ENCODE measurements at regions of chr1 and their contacts with region 1.

Region 1: DNA sequence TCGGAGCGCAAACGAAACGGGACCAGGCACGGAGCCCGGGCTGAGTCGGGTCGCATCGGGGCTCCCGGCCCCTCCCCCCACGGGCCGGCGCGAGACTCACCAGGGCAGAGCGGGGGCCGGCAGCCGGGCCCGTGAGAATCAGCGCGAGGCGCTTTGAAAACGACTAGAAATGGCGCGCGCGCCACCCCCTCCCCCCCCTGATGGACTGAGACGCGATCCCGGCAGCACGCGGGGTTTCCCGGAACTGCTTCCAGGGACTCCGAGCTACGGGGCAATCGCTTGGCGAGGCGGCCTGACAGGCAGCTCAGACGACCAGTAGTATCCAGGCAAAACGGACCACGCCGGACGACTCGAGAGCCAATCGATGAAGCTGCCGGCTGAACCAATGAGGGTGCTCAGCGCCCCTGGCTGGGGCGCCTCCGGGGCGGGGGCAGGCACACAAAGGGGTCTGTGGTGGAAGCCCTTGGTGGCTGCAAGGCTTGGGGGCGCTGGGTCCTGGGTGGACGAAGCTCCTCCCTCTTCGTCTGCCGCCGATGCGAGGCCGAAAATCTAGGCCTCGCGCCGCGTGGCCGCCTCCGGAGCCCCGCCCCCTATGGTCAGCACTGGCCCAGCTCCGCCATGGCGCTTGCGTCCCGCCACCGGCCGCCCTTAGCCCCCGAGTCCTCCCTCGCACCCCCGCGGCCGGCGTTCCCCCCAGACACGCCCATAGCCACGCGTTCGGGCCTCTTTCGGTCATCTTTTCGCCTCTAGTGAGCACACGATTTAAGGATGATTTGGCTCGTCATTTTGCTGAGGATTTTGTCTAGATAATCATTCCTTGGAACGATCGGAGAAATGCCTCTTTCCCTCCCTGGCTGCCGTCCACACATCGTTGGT is at the start of gene HNRNPR:
- DNase-seq: peak; percentile 98
- H3K4me3 Mint-ChIP-seq: peak within 1 kb of the TSS; percentile 94
- H3K27ac Mint-ChIP-seq: peak within 1 kb of the TSS; percentile 100
- H3K4me1 Mint-ChIP-seq: peaks cover 48% of the 10 kb centered on the region
- H3K27me3 Mint-ChIP-seq: peaks cover 2% of the 10 kb centered on the region
- total RNA-seq, gene HNRNPR: 241 and 247 TPM in 2 replicates

Region 2: GRCh38 chr1:21344750-21345443 is 1999.5 kb before region 1 on chr1:
- intact Hi-C with region 1: loop called (anchors 5 kb)
- DNase-seq: no peak
- H3K4me3 Mint-ChIP-seq: peak overlapping the region; percentile 97
- H3K27ac Mint-ChIP-seq: peak overlapping the region; percentile 76
- H3K4me1 Mint-ChIP-seq: peaks cover 37% of the 10 kb centered on the region
- H3K27me3 Mint-ChIP-seq: no peaks in the 10 kb centered on the region

Region 3: GRCh38 chr1:23286401-23286800 is 57.9 kb before region 1 on chr1:
- intact Hi-C with region 1: no loop called
- DNase-seq: no peak
- H3K4me3 Mint-ChIP-seq: no peak overlapping the region
- H3K27ac Mint-ChIP-seq: no peak overlapping the region
- H3K4me1 Mint-ChIP-seq: no peaks in the 10 kb centered on the region
- H3K27me3 Mint-ChIP-seq: no peaks in the 10 kb centered on the region

Region 4: GRCh38 chr1:23403735-23404486 is 59.6 kb after region 1 on chr1:
- intact Hi-C with region 1: loop called (anchors 1 kb)
- DNase-seq: peak; percentile 72
- H3K4me3 Mint-ChIP-seq: no peak overlapping the region
- H3K27ac Mint-ChIP-seq: no peak overlapping the region
- H3K4me1 Mint-ChIP-seq: peaks cover 12% of the 10 kb centered on the region
- H3K27me3 Mint-ChIP-seq: no peaks in the 10 kb centered on the region

Region 5: DNA sequence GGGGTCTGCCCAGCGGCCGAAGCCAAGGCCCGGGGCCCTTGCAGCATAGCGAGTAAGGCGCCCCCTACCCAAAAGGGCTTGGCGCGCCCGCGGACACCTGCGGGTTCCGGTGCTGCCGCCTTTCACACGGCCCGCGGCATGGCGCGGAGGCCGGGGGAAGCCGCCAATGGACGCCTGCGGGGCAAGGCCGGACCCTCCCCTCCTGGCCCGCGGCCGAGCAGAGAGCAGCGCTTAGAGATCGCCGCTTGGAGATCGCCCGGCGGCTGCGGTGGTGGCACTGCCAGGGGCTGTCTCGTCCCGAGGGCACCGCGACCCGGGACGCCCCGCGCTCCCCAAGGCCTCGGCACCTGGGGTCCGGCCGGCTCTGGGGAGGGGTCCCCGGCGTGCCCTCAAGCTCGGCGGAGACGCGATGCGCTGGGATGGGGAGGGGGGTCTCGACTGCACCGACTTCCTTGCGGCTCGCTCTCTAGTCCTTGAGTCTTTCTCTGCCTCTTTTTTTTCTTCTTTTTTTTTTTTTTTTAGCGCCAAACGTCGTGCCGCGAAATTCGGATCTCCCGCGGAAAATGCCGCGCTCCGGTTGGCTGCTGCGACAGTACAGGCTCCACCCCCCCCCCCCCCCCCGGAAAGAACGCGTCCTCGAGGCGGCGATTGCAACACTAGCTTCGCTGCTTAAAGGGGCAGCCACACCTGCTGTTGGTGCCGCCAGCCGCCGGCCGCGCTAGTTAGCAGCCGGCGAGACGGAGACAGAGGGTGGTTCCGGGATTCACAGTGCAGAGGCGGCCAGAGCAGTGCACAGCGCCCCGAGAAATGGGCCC is 186.6 kb after region 1 on chr1 and contains the start of gene E2F2:
- intact Hi-C with region 1: loop called (anchors 2 kb)
- DNase-seq: peak; percentile 76
- H3K4me3 Mint-ChIP-seq: peak within 1 kb of the TSS; percentile 96
- H3K27ac Mint-ChIP-seq: peak within 1 kb of the TSS; percentile 97
- H3K4me1 Mint-ChIP-seq: peaks cover 84% of the 10 kb centered on the region
- H3K27me3 Mint-ChIP-seq: no peaks in the 10 kb centered on the region
- total RNA-seq, gene E2F2: 32.0 and 33.5 TPM in 2 replicates

Region 6: DNA sequence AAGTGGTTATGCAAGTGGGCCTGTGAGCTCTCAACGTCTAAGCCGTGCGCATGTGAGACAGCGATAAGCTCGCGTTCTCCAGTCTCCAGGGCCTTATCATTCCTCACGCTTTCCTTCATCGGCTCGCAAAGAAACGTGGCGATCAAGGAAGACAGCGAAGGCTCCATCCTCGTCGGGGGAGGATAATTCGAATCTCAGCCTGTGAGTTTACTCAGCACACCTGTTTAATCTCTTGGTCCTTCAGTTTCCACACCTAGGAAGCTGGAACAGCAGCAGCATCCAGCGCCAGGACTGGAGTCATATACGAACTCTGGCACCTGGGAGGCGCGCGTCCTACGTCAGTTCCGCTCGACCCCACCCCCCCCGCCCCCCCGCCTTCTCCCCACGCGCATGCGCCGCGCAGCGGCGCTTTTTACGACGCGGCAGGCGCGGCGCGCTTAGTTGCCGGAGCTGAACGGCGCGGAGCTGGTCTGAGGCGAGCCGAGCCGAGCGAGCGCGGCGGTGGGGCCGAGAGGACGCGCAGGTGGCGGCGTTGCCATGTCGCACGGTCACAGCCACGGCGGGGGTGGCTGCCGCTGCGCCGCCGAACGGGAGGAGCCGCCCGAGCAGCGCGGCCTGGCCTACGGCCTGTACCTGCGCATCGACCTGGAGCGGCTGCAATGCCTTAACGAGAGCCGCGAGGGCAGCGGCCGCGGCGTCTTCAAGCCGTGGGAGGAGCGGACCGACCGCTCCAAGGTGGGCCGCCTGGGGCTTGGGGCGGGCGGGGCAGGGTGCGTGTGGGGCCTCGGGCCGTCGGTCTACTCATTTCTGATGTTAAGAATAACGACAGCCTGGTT is 433.8 kb after region 1 on chr1 and contains the start of gene PITHD1:
- intact Hi-C with region 1: loop called (anchors 10 kb)
- DNase-seq: peak; percentile 80
- H3K4me3 Mint-ChIP-seq: peak within 1 kb of the TSS; percentile 95
- H3K27ac Mint-ChIP-seq: peak within 1 kb of the TSS; percentile 94
- H3K4me1 Mint-ChIP-seq: peaks cover 43% of the 10 kb centered on the region
- H3K27me3 Mint-ChIP-seq: no peaks in the 10 kb centered on the region
- total RNA-seq, gene PITHD1: 83.2 and 83.4 TPM in 2 replicates